ENCODE measurements at regions of chr5 and their contacts with region 1.

Region 1: DNA sequence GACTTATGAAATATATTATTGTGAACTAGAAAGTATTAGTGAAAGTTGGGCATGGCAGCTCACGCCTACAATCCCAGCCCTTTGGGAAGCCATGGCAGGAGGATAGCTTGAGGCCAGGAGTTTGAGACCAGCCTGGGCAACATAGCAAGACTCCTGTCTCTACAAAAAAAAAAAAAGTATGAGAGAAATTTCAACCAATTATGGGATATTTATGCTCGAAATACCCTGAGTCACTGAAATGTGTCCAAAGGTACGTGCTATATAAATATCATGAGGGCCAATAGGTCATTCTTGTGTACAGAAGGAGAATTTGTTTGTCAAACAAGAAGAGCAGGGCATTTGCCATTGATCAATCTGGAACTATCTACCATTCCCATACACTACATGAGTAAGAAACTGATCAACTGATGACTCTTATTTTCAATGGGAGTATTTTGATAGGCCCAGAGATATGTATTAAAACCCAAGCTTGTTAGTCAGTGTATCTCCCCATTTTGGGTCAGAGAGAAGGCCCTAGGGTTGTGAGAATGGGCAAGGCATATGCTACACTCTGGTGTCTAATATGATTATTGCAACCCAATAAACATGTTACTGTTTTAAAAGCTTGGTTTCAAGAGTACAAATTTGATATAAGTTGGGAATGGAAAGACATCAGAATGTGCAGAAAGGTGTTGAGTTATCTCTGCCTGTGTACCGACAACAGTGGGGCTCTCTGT is 21.7 kb upstream of the HOMER1 start:
- DNase-seq: peak; percentile 32
- ATAC-seq: peak; percentile 45
- H3K4me3 ChIP-seq: no peak overlapping the region
- H3K27ac ChIP-seq: no peak overlapping the region
- H3K4me1 ChIP-seq: no peaks in the 10 kb centered on the region
- H3K27me3 ChIP-seq: no peaks in the 10 kb centered on the region
- CTCF ChIP-seq: peak; percentile 41; the same call in 1 of the 2 replicates

Region 2: GRCh38 chr5:79329453-79329852 is 206.2 kb before region 1 on chr5:
- CTCF ChIA-PET with region 1: no interaction called
- POLR2A ChIA-PET with region 1: no interaction called
- intact Hi-C with region 1: loop called (anchors 10 kb)
- DNase-seq: no peak
- ATAC-seq: no peak
- H3K4me3 ChIP-seq: no peak overlapping the region
- H3K27ac ChIP-seq: no peak overlapping the region
- H3K4me1 ChIP-seq: no peaks in the 10 kb centered on the region
- H3K27me3 ChIP-seq: no peaks in the 10 kb centered on the region
- CTCF ChIP-seq: no peak

Region 3: DNA sequence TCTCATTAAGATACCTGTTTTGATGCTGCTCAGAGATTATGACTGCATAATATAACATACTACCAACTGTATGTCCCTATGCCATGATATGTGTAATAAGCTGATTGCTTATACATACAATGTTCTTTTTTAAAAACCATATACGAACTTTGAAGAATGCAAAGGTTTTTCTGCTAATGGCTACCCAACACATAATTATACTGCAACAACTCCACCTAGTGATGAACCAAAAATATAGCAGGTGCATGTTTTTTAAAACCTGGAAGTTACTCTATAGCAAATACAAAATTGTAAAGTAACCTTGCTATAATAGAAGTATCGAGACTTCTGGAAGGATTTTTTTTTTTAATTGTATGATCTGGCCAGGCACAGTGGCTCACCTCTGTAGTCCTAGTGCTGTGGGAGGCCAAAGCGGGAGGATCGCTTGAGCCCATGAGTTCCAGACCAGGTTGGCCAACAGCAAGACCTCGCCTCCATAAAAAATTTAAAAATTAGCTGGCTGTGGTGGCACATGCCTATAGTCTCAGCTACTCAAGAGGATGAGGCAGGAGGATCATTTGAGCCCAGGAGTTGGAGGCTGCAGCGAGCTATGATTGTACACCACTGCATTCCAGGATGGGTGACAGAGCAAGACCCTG is 70.8 kb before region 1 on chr5:
- CTCF ChIA-PET with region 1: interaction called, 5 read pairs
- POLR2A ChIA-PET with region 1: no interaction called
- intact Hi-C with region 1: loop called (anchors 5 kb)
- DNase-seq: peak; percentile 52
- ATAC-seq: peak; percentile 55
- H3K4me3 ChIP-seq: peak overlapping the region; percentile 40; the same call in 1 of the 2 replicates
- H3K27ac ChIP-seq: no peak overlapping the region
- H3K4me1 ChIP-seq: no peaks in the 10 kb centered on the region
- H3K27me3 ChIP-seq: no peaks in the 10 kb centered on the region
- CTCF ChIP-seq: peak; percentile 80

Region 4: DNA sequence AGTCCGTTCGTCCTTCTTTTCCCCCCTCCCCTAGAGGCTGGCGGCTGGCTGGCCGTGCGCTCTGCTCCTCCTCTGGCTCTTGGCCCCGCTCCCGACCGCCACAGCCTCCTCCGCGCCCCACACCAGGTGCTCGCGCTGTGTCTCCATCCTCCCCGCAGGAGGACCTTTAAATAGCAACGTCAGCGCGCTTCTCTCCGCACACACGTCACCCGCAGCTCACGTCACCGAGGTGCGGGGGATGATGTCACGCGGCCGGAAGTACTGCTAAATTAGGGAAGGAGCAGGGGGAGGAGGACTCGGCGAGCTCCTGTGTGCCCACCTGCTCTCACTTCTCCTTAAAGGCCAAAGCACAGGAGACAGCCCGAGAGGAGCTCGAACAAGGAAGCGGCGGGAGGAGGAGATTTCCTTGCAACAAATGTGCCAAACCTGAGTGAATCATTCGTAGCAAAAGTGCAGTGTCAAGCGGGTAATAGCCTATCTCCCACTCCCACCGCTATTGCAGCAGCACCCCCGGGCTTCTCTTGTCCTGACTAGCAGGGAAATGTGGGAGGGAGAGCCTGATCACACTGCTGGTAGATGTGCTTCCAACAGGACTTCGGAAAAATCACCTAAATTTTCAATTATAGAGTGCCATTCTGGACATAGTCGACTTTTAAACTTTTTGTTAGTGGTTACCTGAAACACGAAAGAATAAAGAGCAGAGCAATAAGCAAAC is 21.1 kb before region 1 on chr5:
- CTCF ChIA-PET with region 1: no interaction called
- POLR2A ChIA-PET with region 1: no interaction called
- intact Hi-C with region 1: no loop called
- DNase-seq: peak; percentile 81
- ATAC-seq: peak; percentile 56
- H3K4me3 ChIP-seq: peak overlapping the region; percentile 91
- H3K27ac ChIP-seq: peak overlapping the region; percentile 65
- H3K4me1 ChIP-seq: peaks cover 15% of the 10 kb centered on the region; the same call in 1 of the 2 replicates
- H3K27me3 ChIP-seq: no peaks in the 10 kb centered on the region
- CTCF ChIP-seq: no peak

Region 5: DNA sequence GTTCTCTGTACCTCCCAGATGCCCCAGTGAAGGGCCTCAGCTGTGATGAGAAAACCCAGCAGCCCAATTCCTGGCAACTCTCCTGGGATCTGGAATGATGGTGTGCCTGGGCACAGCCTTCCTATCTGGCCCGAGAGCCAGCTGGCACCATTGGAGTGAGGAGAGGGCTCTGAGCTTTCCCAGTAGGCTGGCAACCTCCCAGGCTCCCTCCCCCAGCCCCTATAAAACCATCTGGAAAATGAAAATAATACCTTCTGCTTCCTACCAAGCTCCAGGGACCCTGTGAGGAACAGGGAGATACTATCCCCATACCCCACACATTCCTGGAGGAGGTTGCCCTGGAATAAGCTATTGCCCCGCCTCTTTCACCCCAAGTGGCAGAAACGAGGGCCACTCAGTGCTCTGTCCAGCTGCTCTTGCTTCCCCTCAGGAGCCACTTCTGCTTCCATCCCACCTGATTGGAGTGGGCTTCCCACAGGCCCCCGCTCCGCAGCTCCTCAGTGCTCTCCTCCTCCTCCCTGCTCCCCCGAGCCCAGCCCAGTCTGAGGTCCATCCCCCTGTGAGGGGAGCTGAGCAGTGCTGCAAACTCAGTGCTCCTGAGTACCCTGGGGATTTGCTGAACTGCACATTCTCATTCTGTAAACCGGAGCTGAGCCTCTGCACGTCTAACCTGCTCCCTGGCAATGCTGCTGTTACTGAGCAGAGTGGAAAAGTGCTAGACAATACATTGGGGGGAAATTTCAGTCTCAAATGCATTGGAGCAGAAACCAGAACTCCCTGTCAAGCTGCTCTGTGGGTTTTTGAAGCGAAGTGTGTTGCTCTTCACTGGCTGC is 574.2 kb after region 1 on chr5:
- CTCF ChIA-PET with region 1: no interaction called
- POLR2A ChIA-PET with region 1: no interaction called
- intact Hi-C with region 1: no loop called
- DNase-seq: no peak
- ATAC-seq: no peak
- H3K4me3 ChIP-seq: no peak overlapping the region
- H3K27ac ChIP-seq: no peak overlapping the region
- H3K4me1 ChIP-seq: no peaks in the 10 kb centered on the region
- H3K27me3 ChIP-seq: no peaks in the 10 kb centered on the region
- CTCF ChIP-seq: no peak

Measured in PC-3 (cell line).